GM10248 (cell line): ENCODE measurements at regions of chr1 and their contacts with region 1.

Region 1: DNA sequence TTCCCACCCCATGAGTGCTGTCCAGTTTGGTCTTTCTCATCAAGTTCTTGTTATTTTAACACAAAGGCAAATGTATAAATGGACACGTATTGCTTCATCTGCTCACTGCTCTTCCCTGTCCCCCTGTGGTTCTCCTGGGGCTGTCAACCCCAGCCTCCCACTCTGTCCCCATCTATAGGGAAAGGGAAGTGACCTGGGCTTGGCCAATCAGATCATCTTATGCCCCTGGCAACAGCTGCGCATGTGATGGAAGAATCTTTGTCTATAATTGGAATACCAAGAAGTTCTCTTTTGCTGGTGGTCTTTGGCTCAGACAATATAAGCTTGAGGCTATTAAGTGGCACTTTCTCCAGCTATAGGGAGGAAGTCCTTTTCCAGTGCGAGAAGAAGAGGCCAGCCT is 4.7 kb upstream of the CCSAP start:
- DNase-seq: no peak
- CTCF ChIP-seq: no peak

Region 2: GRCh38 chr1:229360417-229360816 is 12.9 kb after region 1 on chr1:
- CTCF ChIA-PET with region 1: interaction called, 12 read pairs
- POLR2A ChIA-PET with region 1: no interaction called
- DNase-seq: no peak
- CTCF ChIP-seq: no peak

Region 3: GRCh38 chr1:229669333-229669732 is 321.8 kb after region 1 on chr1:
- CTCF ChIA-PET with region 1: no interaction called
- POLR2A ChIA-PET with region 1: no interaction called
- DNase-seq: no peak
- CTCF ChIP-seq: no peak